Right lobe of liver (tissue), 6 donors: ENCODE measurements at regions of chr12 and their contacts with region 1.

Region 1: GRCh38 chr12:9156119-9156518 is 40.4 kb upstream of the A2M start:
- DNase-seq: no peak
- ATAC-seq: no peak
- H3K4me3 ChIP-seq: no peak overlapping the region
- H3K27ac ChIP-seq: no peak overlapping the region
- H3K4me1 ChIP-seq: no peaks in the 10 kb centered on the region
- H3K27me3 ChIP-seq: no peaks in the 10 kb centered on the region
- CTCF ChIP-seq: no peak
- POLR2A ChIP-seq: no peak

Region 2: DNA sequence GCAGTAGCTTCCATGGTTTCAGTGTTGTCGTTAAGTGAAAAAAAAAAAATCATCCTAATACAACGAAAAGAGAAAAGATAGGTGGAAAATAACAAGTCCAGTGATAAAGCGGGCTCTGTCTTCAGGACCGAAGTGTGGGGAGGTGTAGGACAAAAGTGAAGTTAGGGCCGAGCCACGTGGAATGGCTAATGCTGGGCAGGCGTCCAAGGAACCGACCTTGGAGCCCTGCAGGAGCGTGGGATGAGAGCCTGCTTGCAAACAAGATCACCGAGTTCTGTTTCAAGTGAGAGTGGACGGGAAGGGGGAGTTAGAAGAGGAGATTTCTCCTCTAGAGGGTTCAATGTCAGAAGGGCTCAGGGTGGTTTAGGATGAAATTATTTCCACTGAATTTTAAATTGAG is 311.5 kb before region 1 on chr12:
- intact Hi-C with region 1: no loop called
- DNase-seq: peak; percentile 68 to 77 (median 76)
- ATAC-seq: peak; percentile 86 to 96 (median 94)
- H3K4me3 ChIP-seq: no peak overlapping the region
- H3K27ac ChIP-seq: no peak overlapping the region
- H3K4me1 ChIP-seq: peaks cover 0 to 8% (median 0%) of the 10 kb centered on the region in 4 donors
- H3K27me3 ChIP-seq: no peaks in the 10 kb centered on the region
- CTCF ChIP-seq: no peak
- POLR2A ChIP-seq: no peak

Region 3: DNA sequence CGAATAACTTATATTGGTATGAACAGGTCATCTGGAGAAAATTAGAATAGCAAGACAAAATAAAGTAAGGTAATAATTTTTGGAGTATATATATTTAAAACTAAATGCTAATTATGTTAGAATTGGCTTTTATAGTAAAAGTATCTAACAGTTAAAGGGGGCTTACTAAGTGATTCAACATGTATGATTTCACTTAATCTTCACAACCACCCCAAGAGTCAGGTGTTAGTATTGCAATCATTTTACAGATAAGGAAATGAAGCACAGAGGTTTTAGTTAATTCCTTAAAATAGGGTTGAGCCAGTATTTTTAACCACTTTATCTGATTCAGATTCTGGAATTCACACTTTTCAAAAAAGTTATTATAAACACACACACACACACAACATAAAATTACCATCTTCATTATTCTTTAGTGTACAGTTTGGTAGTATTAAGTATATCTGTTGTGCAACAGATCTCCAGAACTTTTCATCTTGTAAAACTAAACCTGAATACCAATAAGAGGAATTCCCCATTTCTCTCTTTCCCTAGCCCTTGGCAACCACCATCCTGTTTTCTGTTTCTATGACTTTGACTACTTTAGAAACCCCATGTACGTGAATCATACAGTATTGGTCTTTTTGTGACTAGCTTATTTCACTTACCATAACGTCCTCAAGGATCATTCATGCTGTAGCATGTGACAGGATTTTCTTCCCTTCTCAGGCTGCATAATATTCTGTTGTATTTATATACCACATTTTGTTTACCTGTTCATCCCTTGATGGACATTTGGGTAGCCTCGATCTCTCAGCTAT is 52.9 kb before region 1 on chr12:
- intact Hi-C with region 1: loop called in 1 of 2 experiments (anchors 10 kb)
- DNase-seq: no peak
- ATAC-seq: no peak
- H3K4me3 ChIP-seq: no peak overlapping the region
- H3K27ac ChIP-seq: no peak overlapping the region
- H3K4me1 ChIP-seq: no peaks in the 10 kb centered on the region
- H3K27me3 ChIP-seq: no peaks in the 10 kb centered on the region
- CTCF ChIP-seq: no peak
- POLR2A ChIP-seq: peak; percentile 28